HAP-1 (cell line): ENCODE measurements at regions of chr17 and their contacts with region 1.

Region 1: DNA sequence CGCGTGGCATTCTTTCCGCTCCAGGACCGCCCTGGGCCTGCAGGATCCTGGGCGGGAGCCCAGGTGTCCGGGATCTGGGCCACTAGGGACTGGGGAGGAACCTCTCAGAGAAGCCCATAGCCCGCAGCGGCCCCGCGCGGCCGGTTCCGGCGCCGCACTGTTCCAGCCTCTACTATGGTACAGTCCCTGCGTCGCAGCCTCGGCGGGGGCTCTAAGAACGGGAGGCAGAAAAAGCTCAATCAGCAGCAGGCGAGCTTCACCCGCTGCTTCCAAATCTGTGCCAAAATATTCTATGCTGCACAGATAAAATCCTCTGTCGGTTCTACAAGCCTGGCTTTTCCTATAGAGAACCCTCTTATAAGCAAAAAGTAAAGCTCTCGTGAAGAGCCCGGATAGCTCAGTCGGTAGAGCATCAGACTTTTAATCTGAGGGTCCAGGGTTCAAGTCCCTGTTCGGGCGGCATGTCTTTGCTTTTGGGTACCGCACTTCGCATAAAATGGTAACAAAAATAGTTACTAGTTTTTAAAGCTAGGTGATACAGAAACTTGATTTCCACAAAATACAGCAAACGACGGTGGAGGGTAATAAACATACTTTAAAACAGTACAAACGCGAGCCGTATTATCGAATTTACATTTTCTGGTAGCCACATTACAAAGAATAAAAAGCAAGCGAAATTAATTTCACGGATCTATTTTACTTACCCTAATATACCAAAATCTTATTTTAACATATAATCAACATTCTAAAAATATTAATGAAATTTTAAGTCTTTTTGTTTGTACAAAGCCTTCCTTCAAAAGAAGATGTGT is 661 bp upstream of the ALOXE3 start:
- DNase-seq: peak; percentile 85 to 95
- H3K4me3 ChIP-seq: peak overlapping the region; percentile 40
- H3K4me1 ChIP-seq: peaks cover 11% of the 10 kb centered on the region
- H3K27me3 ChIP-seq: no peaks in the 10 kb centered on the region

Region 2: DNA sequence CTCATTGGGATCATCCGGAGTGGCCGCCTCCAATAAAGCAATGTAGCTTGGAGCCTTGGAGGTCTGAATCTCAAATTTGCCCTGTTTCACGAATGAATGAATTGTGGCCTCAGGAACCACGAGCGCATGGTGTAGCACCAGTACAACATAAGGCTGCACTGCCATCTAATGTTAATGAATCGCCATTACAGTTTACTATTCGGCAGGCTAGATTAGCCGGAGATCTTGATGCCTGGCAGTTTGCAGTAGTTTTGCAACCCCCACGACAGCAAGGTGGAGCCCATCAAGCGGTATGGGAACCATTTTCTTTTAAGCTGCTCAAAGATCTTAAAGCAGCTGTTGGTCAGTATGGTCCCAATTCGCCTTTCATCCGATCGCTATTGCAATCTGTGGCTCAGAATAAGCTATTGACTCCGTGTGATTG is 61.3 kb before region 1 on chr17:
- in situ Hi-C with region 1: loop called (anchors 5 kb)
- DNase-seq: peak; percentile 77 to 85
- H3K4me3 ChIP-seq: no peak overlapping the region
- H3K4me1 ChIP-seq: peaks cover 10% of the 10 kb centered on the region
- H3K27me3 ChIP-seq: peaks cover 10% of the 10 kb centered on the region; the same call in 1 of the 2 replicates

Region 3: GRCh38 chr17:8189711-8190477 is 70.9 kb after region 1 on chr17 and contains the start of gene BORCS6:
- in situ Hi-C with region 1: loop called (anchors 5 kb)
- DNase-seq: peak; percentile 98 to 99
- H3K4me3 ChIP-seq: peak within 1 kb of the TSS; percentile 93
- H3K4me1 ChIP-seq: peaks cover 21% of the 10 kb centered on the region
- H3K27me3 ChIP-seq: no peaks in the 10 kb centered on the region

Region 4: GRCh38 chr17:8222630-8223356 is 103.8 kb after region 1 on chr17:
- in situ Hi-C with region 1: loop called (anchors 5 kb)
- DNase-seq: peak; percentile 90 to 96
- H3K4me3 ChIP-seq: peak overlapping the region; percentile 63
- H3K4me1 ChIP-seq: peaks cover 25% of the 10 kb centered on the region
- H3K27me3 ChIP-seq: no peaks in the 10 kb centered on the region